Posterior cingulate gyrus (tissue), 11 donors: ENCODE measurements at regions of chr20 and their contacts with region 1.

Region 1: DNA sequence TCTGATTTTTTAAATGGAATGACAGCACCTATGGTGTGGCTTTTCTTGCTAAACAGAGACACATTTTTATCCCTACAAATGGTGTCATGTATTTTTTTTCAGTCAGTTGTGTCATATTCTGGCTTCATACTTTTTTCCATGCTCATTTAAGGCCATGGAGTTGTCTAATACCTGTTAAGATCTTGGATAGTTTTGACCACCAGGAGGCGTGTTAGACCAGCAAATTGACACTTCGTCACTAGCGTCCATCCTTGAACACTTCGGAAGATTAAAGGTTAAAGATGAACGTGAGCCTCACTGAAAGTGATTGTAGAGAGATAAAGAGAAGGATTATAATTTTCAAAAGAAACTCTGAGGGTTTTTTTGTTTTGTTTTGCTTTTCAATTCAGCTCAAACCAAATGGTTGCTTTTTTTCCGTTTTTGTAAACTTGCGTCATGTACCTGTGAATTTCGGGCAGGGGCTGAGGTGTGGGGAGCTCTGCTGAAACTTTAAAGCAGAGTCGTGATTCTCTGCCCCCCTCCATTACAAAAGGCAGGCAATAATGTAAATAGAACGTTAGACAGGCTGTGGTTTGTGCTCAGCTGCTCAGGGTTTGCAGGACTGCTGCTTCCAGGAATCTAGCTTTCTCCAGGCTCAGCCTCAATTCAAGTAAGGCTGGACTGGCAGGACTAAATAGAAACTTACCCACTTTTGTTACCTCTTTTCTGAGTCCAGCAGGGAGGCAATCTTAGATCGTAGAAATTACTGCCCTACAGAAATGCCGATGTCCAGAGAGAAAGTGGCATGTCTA is 245.1 kb downstream of the FOXA2 start:
- DNase-seq: peak in 3 of 10 donors; percentile 19 to 53 (median 31)

Region 2: DNA sequence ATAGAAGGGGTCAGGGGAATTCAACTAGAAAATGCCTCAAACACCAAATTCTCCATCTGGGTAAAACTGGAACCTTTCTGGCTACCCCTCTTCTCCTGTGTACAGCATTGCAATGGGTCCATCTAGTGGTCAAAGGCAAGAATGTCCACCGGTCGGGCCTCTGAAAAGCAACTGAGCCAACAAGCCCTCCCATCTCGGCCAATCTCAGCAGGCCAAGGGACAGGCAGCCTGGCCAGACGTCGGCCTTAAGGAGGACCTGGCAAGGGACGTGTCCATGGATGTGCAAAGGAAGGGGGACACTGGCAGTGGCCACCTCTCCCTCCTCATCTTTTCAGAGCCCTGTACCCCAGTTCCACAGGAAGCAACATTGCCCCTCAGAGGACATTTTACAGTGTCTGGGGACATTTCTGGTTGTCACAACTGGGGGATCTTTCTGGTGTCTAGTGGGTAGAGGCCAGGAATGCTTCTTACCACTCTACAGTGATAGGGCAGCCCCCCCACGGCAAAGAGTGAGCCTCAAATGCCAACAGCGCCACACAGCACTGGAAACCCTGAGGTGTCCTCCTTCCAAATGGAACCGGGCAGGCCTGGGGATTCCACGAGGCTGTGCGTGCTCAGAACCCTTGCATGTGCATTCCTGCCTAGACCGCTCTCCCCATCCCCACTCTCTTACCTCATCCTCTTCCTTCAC is 344.9 kb after region 1 on chr20:
- intact Hi-C with region 1: loop called (anchors 1 kb)
- DNase-seq: peak; percentile 45 to 93 (median 67)

Region 3: GRCh38 chr20:23350196-23350903 is 1011.1 kb after region 1 on chr20 and contains the start of gene NXT1:
- intact Hi-C with region 1: loop called (anchors 5 kb)
- DNase-seq: peak; percentile 94 to 100 (median 97)